ENCODE measurements at regions of chr3 and their contacts with region 1.

Region 1: DNA sequence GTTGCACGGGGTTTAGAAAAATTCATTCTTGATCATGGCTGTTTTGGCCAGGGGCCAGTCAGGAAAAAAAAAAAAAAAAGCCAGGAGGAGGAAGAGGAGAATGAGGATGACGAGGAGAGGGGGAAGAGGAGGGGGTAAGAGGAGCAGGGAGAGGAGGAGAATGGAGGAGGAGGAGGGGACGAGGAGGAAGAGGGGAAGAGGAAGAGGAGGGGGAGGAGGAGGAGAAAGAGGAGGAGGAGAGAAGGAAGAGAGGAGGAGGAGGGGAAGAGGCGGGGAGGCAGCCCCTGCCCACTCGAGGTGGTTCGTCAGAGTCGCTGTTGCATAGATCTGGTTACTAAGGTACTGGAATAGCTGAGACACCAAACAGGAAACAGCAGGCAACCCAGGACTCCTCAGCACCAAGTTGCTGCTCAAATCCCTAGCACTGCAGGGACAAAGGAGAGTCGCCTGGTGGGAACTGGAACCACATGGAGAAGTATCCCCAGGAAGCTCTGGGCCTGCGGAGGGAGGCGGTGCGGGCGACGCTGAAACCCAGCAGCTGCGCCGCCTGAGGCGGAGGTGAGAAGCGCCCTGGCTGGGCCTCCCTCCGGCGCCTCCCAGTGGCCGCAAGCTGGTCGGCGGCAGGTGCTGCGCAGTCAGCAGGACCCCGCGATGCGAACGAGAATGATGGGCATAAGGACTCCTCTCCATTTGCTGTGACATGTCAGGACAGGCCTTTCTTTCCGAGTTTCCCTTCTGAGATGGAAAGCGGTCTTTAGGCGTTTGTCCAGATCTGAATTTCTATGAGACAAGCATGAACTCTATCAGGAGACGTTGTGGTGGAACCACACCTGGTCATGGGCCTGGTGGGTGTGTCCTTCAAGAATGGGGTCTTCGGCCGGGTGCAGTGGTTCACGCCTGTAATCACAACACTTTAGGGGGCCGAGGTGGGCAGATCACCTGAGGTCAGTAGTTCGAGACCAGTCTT is 17.5 kb downstream of the FAM240A start:
- DNase-seq: peak; percentile 85
- ATAC-seq: peak; percentile 98
- H3K4me3 ChIP-seq: peak overlapping the region in 4 of 5 experiments; percentile 7 to 47 (median 44)
- H3K4me3 Mint-ChIP-seq: peak overlapping the region; percentile 76
- H3K27ac ChIP-seq: no peak overlapping the region
- H3K27ac Mint-ChIP-seq: peak overlapping the region; percentile 46
- H3K4me1 ChIP-seq: peaks cover 4 to 11% of the 10 kb centered on the region in 2 donors
- H3K4me1 Mint-ChIP-seq: peaks cover 14% of the 10 kb centered on the region
- H3K27me3 ChIP-seq: no peaks in the 10 kb centered on the region
- H3K27me3 Mint-ChIP-seq: no peaks in the 10 kb centered on the region
- CTCF ChIP-seq: peak; percentile 98

Region 2: DNA sequence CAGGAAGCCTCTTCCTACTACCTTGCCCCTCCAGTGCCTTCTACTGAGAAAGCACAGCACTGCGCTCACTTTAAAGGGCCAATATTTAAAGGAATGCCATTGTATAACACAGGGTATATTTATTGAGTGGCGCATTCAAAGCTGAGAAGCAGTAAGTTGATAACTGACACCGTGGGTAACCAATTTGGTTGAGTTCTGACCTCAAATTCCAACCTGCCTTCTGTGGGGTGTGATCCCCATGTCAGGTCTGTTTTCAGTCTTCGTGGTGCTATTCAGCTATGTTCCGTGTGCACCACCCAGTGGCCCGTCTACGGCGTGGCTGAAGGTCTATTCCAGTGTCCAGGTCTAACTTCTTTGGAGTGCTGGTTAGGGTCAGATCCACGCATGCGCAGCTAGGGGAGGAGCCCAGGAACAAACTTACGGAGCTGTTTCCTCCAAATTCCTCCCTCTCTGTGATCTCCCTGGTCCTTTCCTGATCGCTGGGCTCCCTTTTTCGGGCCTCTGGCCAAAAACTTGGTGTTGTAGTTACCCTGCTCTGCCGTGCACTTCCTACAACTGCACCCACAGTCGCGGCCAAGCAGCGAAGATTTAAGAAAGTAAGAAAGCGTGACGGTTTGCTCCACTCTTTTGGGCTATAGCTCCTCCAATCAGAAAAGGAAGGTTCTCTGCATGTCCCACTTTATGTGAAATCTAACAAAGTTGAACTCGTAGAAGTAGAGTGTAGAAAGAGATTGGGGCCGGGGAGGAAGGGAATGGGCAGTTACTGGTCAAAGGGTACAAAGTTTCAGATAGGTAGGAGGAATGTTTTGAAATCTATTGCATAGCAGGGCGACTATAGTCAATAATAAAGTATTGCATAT is 71.4 kb before region 1 on chr3:
- CTCF ChIA-PET with region 1: interaction called, 36 read pairs
- POLR2A ChIA-PET with region 1: no interaction called
- intact Hi-C with region 1: loop called (anchors 1 kb)
- DNase-seq: peak; percentile 88
- ATAC-seq: peak; percentile 99
- H3K4me3 ChIP-seq: peak overlapping the region in 3 of 5 experiments; percentile 27 to 37 (median 37)
- H3K4me3 Mint-ChIP-seq: peak overlapping the region; percentile 74
- H3K27ac ChIP-seq: no peak overlapping the region
- H3K27ac Mint-ChIP-seq: peak overlapping the region; percentile 21
- H3K4me1 ChIP-seq: peaks cover 13% of the 10 kb centered on the region in 2 donors
- H3K4me1 Mint-ChIP-seq: peaks cover 14% of the 10 kb centered on the region
- H3K27me3 ChIP-seq: no peaks in the 10 kb centered on the region
- H3K27me3 Mint-ChIP-seq: peaks cover 6% of the 10 kb centered on the region
- CTCF ChIP-seq: peak; percentile 85

Region 3: GRCh38 chr3:46565607-46566035 is 64.2 kb before region 1 on chr3:
- CTCF ChIA-PET with region 1: interaction called, 36 read pairs
- POLR2A ChIA-PET with region 1: no interaction called
- intact Hi-C with region 1: no loop called
- DNase-seq: no peak
- ATAC-seq: no peak
- H3K4me3 ChIP-seq: peak overlapping the region in 3 of 5 experiments; percentile 33 to 59 (median 40)
- H3K4me3 Mint-ChIP-seq: peak overlapping the region; percentile 76
- H3K27ac ChIP-seq: no peak overlapping the region
- H3K27ac Mint-ChIP-seq: no peak overlapping the region
- H3K4me1 ChIP-seq: peaks cover 14 to 15% of the 10 kb centered on the region in 2 donors
- H3K4me1 Mint-ChIP-seq: peaks cover 13% of the 10 kb centered on the region
- H3K27me3 ChIP-seq: peaks cover 0 to 30% (median 21%) of the 10 kb centered on the region in 4 experiments
- H3K27me3 Mint-ChIP-seq: peaks cover 41% of the 10 kb centered on the region
- CTCF ChIP-seq: no peak

Region 4: GRCh38 chr3:46640927-46641326 is 11.1 kb after region 1 on chr3:
- CTCF ChIA-PET with region 1: interaction called, 14 read pairs
- POLR2A ChIA-PET with region 1: no interaction called
- intact Hi-C with region 1: no loop called
- DNase-seq: no peak
- ATAC-seq: no peak
- H3K4me3 ChIP-seq: no peak overlapping the region
- H3K4me3 Mint-ChIP-seq: no peak overlapping the region
- H3K27ac ChIP-seq: no peak overlapping the region
- H3K27ac Mint-ChIP-seq: no peak overlapping the region
- H3K4me1 ChIP-seq: no peaks in the 10 kb centered on the region
- H3K4me1 Mint-ChIP-seq: no peaks in the 10 kb centered on the region
- H3K27me3 ChIP-seq: peaks cover 0 to 3% (median 1%) of the 10 kb centered on the region in 4 experiments
- H3K27me3 Mint-ChIP-seq: peaks cover 23% of the 10 kb centered on the region
- CTCF ChIP-seq: no peak

Region 5: DNA sequence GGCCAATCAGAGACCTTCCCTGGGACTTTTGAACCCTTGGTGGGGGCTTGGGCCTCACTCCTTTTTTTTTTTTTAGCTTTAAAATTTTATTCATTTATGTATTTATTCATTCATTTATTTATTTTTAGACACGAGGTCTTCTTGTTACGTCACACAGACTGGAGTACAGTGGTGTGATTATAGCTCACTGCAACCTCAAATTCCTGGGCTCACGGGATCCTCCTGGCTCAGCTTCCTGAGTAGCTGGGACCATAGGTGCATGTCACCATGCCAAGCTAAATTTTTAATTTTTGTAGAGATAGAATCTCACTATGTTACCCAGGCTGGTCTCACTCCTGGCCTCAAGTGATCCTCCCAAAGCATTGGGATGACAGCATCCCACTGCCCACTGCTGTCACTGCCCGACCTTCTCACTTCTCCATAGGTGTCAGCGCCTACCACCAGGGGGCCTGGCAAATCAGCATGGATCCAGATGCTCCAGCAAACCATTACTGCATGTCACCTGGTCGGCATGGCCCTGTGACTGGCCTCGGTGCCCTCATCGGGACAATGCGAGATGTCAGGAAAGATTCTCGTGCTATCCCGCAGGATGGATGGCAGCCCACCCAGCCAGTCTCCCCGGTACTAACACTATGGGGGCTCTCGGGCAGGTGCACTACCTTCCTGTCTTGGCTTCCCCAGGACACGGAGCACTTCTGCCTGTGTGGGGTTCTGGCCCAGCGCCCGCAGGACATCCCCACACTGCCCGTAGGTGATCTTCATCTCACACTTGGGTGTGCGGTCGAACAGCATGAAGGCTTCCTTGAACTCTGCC is 230.4 kb after region 1 on chr3:
- CTCF ChIA-PET with region 1: no interaction called
- POLR2A ChIA-PET with region 1: no interaction called
- intact Hi-C with region 1: no loop called
- DNase-seq: no peak
- ATAC-seq: no peak
- H3K4me3 ChIP-seq: no peak overlapping the region
- H3K4me3 Mint-ChIP-seq: no peak overlapping the region
- H3K27ac ChIP-seq: no peak overlapping the region
- H3K27ac Mint-ChIP-seq: no peak overlapping the region
- H3K4me1 ChIP-seq: no peaks in the 10 kb centered on the region
- H3K4me1 Mint-ChIP-seq: no peaks in the 10 kb centered on the region
- H3K27me3 ChIP-seq: no peaks in the 10 kb centered on the region
- H3K27me3 Mint-ChIP-seq: peaks cover 15% of the 10 kb centered on the region
- CTCF ChIP-seq: peak; percentile 22

Measured in B cell (primary cell).